Aorta (tissue), 5 donors: ENCODE measurements at regions of chr5 and their contacts with region 1.

Region 1: GRCh38 chr5:40834849-40835787 is at the start of gene RPL37:
- DNase-seq: peak; percentile 98
- ATAC-seq: peak; percentile 99
- H3K4me3 ChIP-seq: peak within 1 kb of the TSS; percentile 45 to 83
- H3K27ac ChIP-seq: peak within 1 kb of the TSS; percentile 89 to 99
- H3K4me1 ChIP-seq: no peaks in the 10 kb centered on the region
- H3K27me3 ChIP-seq: no peaks in the 10 kb centered on the region
- total RNA-seq, gene RPL37: 772 to 916 TPM

Region 2: DNA sequence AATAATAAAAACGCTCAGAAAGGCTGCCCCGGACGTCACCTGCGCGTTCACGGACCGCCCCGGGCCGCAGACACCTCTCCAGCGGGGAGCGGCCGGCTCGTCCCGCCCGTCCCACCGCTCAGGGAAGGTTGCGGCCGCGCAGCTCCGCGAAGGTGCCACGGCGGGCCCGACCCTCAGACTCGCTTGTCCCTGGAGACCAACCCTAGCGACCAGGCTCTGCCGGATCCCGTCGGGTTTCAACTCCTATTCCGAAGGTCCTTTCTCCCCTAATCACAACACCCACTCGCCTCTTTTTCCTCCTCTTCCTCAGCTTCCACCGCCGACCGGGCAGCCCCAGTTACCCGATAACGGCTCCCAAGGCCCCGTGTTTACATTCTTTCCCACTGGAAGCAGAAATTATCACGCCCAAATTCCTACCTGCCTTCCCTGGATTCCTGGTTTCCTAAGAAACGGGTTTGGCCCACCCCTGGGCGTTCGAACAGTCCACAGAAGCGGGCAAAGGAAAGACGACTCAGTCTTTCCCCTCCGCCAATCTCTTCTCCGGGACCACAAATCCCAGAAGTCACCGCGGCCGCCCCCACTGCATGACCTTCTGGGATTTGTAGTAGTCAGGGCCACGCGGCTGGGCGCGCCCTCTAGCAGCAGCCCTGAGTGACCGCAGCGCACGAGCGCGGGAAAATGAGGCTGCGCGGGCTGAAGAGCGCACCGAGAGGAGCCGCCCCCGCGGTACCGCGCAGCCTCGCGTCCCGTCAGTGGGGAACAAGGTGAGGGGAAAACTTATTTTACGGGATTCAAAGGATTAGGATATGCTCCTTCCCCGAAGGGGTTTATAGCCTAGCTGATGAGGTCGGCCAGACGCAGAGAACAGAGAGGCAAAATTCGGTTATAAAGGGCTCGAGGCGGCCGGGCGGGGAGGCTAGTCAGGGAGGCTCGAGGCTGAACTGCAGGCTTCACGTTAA is 79.4 kb before region 1 on chr5 and contains the start of gene TTC33:
- intact Hi-C with region 1: loop called (anchors 2 kb)
- DNase-seq: peak; percentile 97 to 99
- ATAC-seq: peak; percentile 99
- H3K4me3 ChIP-seq: peak within 1 kb of the TSS; percentile 67 to 83
- H3K27ac ChIP-seq: peak within 1 kb of the TSS; percentile 16 to 90
- H3K4me1 ChIP-seq: peaks cover 0 to 4% of the 10 kb centered on the region in 2 donors
- H3K27me3 ChIP-seq: no peaks in the 10 kb centered on the region
- total RNA-seq, gene TTC33: 18.7 to 19.4 TPM

Region 3: DNA sequence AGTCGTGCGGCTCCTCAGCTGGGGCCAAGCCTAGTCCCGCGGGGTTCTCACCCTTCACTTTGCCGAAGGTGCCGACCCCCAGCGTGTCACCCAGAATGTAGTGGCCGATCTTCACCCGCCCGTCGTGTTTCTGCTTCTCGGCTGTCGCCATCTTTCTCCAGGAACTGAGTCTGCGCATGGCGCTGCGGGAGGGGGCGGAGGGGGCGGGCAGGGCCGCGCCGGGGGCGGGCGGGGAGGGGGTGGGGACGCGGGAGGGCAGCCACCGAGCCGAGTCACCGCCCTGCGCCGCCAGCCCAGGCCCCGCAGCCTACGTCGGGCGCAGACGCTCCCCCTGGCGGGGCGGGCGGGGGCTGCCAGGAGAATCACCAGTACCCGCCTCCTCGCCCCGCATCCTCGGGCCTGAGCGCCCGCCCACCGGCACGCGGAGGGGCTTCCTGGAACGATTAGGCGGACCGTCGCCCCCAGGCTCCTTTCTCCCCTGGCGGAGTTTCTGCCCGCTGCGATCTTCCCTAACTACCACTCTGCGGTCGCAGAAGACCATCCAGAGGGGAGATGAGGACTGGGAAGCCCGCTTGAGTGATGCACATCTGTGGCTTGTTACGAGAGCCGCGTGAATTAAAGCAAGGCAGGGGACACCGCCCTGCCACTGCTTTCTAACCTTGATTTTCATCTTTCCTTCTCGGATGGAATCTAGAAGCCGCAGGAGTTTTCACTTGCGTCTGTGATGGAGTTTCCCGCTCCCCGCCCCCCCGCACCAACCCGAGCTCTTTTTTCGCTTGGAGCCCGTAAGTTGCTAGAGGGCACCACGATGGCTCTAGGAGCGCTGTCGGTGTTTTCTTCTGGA is 36.9 kb before region 1 on chr5 and contains the start of gene PRKAA1:
- intact Hi-C with region 1: loop called in 1 of 2 experiments (anchors 1 kb)
- DNase-seq: peak; percentile 93 to 96
- ATAC-seq: peak; percentile 99
- H3K4me3 ChIP-seq: peak within 1 kb of the TSS; percentile 93 to 98
- H3K27ac ChIP-seq: peak within 1 kb of the TSS; percentile 64 to 86
- H3K4me1 ChIP-seq: peaks cover 0 to 5% of the 10 kb centered on the region in 2 donors
- H3K27me3 ChIP-seq: no peaks in the 10 kb centered on the region
- total RNA-seq, gene PRKAA1: 103 to 104 TPM

Region 4: GRCh38 chr5:40879163-40879942 is 44.2 kb after region 1 on chr5:
- intact Hi-C with region 1: loop called in 1 of 2 experiments (anchors 5 kb)
- DNase-seq: no peak
- ATAC-seq: no peak
- H3K4me3 ChIP-seq: no peak overlapping the region
- H3K27ac ChIP-seq: no peak overlapping the region
- H3K4me1 ChIP-seq: no peaks in the 10 kb centered on the region
- H3K27me3 ChIP-seq: no peaks in the 10 kb centered on the region

Region 5: DNA sequence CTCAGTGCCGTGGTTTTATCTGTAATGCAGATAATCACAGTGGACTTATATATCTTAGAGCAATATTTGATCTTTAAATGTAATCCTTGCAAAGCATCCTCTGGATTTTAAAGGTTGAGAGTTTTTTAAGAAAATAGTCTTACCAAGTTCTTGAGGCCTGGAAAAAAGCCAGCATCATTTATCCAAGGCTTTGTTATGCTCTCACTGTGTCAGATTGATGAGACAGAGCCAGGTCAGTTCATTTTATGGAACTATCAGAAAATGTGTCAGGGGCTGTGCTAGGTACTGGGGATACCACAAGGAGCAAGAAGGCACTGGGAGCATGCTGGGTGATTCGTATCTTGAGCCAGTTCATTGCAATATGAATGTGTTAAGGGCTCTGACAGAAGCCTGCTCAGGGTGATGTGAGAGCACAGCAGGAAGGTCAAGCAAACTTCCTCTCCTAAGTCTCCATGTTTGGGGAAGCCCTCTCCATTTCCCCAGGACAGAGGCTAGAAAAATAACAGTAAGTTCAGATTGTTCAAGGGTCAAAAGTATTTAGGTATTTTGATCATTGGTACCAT is 93.8 kb after region 1 on chr5:
- intact Hi-C with region 1: no loop called
- DNase-seq: no peak
- ATAC-seq: no peak
- H3K4me3 ChIP-seq: no peak overlapping the region
- H3K27ac ChIP-seq: no peak overlapping the region
- H3K4me1 ChIP-seq: no peaks in the 10 kb centered on the region
- H3K27me3 ChIP-seq: no peaks in the 10 kb centered on the region

Region 6: DNA sequence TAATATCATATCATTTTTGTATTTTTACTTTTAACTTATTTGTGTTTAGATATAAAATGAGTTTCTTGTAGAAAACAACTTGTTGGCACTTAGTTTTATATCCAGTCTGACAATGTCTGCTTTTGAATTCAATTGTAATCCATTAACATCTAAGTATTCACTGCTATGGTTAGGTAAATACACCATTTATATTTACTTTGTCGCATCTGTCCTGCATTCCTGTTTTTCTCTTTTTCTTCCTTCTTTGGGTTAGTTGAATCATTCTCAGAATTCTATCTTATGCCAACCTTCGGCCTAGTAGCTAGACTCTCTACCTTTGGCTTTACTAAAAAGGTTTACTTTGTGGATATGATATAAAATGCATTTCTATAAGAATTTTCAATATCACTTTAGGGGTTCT is 567.7 kb after region 1 on chr5:
- intact Hi-C with region 1: no loop called
- DNase-seq: no peak
- ATAC-seq: no peak
- H3K4me3 ChIP-seq: no peak overlapping the region
- H3K27ac ChIP-seq: no peak overlapping the region
- H3K4me1 ChIP-seq: no peaks in the 10 kb centered on the region
- H3K27me3 ChIP-seq: no peaks in the 10 kb centered on the region